ENCODE measurements at regions of chr12 and their contacts with region 1.

Region 1: GRCh38 chr12:49515266-49515665 is 23.6 kb upstream of the KCNH3 start:
- DNase-seq: no peak
- H3K4me3 ChIP-seq: no peak overlapping the region
- H3K27ac ChIP-seq: no peak overlapping the region
- H3K4me1 ChIP-seq: no peaks in the 10 kb centered on the region
- H3K27me3 ChIP-seq: no peaks in the 10 kb centered on the region
- CTCF ChIP-seq: no peak
- POLR2A ChIP-seq: no peak

Region 2: DNA sequence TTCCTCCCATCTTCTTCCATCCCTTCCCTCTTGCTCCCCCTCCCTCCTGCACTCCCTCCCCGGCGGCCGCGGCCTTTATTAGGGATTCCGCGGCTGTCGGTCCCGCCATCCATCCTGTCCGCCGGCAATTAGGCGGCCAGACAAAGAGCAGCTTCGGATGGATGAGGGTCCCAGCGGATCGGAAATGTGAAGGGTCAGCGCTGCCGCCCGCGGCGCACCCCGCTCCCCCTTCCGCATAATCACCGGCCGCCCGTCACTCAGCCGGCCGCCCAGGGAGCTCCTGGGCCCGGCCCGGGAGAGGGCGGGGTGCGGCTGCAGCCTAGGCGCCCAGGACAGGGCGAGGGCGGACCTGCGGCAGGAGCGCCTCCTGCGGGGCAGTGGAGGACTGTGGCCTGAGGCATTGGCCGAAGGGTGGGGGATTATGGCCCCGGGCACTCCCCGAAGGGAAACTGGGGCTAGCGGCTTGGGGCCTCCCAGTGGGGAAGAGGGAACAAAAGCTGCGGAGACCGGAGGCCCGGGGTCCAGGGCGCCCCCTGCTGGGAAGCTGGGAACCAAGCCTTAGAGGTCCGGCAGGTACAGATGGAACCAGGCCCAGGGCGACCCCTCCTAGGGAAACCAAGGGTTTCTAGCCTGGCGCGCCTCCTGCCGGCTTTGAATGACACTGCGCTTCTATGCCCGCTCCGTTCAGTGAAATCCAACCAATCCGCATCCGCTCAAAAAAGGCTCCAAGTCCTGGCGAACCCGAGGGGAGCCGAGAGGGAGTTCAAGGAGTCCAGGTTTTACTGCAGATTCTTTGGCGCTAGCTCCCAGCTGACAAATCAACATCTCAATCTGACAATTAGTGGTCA is 173.0 kb before region 1 on chr12:
- intact Hi-C with region 1: loop called (anchors 10 kb)
- DNase-seq: peak; percentile 90
- H3K4me3 ChIP-seq: peak overlapping the region; percentile 27 to 39
- H3K27ac ChIP-seq: no peak overlapping the region
- H3K4me1 ChIP-seq: peaks cover 37% of the 10 kb centered on the region
- H3K27me3 ChIP-seq: no peaks in the 10 kb centered on the region
- CTCF ChIP-seq: peak; percentile 54 to 89 (median 60)
- POLR2A ChIP-seq: no peak

Measured in testis (tissue), 5 donors.